ENCODE measurements at regions of chr5 and their contacts with region 1.

Region 1: DNA sequence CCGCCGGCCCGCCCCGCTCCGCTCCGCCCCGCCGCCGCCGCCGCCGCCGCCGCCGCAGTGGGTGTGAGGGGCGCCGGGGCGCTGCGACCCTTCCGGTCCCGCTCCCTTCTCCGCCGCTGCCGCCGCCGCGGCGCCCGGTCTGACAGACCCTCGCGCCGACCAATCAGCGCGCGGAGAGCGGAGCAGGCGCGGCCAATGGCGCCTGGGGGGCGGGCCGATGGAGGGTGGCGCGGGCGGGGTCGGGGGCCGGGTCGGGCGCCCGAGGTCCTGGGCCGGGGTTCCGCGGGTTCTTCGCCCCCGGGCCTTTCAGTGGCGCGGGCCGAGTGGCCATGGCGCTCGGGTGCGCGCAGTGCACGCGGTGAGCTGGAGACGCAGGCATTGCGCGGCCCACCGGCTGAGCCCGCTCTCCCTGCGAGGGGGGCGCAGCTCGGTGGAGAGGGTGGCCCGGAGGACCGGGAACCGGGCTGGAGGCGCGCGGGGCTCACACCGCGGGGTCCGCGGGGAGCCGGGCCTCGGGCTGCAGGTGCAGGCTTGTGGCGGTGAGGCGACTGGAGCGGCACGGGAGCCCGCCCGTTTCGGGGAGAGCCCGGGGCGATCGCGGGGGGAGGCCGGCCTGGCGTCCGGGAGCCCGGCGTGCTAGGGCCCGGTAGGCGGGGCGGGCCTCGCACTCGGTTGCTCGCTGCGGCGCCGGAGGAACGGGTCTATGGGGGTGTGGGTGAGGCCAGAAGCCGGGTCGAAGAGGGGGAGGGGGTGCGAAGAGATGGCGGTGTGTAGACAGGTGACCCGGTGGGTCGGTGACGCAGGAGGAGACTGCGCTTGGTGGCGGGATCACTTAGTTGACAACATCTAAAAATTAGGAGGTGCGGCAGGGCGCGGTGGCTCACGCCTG is at the start of gene MAPK9:
- DNase-seq: peak; percentile 69 to 93 (median 82)
- ATAC-seq: peak; percentile 68
- H3K4me3 ChIP-seq: peak within 1 kb of the TSS; percentile 67
- H3K4me3 Mint-ChIP-seq: peak within 1 kb of the TSS; percentile 97
- H3K27ac ChIP-seq: peak within 1 kb of the TSS; percentile 84 to 95
- H3K27ac Mint-ChIP-seq: peak within 1 kb of the TSS; percentile 99
- H3K4me1 ChIP-seq: peaks cover 46% of the 10 kb centered on the region
- H3K4me1 Mint-ChIP-seq: peaks cover 51% of the 10 kb centered on the region
- H3K27me3 ChIP-seq: no peaks in the 10 kb centered on the region
- H3K27me3 Mint-ChIP-seq: no peaks in the 10 kb centered on the region
- CTCF ChIP-seq: no peak
- total RNA-seq, gene MAPK9: 21.2 to 21.7 TPM

Region 2: DNA sequence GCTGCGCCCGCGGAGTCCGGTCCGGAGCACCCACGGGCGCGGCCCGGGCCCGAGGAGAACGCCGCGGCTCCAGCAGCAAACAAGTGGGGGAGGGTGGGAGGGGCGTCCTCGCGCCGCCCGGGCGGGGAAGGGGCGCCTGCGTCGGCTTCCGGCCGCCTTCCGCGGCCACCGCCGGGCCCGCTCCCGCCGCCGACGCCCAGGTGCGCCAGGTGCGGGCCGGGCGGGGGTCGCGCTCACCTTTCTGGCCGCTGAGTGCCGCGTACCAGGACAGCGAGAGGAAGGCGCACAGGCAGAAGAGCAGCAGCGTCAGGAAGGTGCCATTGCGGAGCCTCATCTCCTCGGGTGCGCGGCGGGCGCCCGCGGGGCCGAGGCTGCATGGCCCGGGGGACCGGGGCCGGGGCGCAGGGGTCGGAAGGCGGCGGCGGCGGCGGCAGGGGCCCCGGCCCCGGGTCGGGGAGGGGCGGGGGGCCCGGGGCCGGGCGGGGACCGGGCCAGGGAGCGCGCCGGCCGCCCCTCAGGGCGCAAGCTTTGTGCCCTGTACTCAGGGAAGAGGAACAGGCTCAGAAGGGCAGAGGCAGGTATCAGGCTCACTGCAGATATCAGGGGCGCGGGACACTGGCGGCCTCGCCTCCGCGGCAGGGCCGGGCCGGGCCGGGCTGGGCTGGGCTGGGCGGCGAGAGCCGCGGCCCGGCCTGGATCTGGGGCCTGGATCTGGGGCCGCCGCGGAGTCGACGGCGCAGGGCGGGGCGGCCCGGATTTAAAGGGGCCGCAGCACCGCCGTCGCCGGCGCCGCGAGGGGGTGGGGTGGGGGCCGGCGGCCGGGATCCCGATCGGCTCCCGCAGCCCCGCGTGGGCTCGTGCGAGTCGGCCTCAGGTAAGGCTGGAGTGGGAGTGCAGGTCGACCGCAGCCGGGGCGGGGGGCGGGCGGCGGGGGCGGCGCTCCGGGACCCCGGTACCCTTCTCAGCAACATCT is 485.7 kb before region 1 on chr5 and contains the start of gene MGAT4B:
- CTCF ChIA-PET with region 1: no interaction called
- POLR2A ChIA-PET with region 1: no interaction called
- intact Hi-C with region 1: loop called in 1 of 2 experiments (anchors 10 kb)
- DNase-seq: peak in 13 of 14 experiments; percentile 39 to 82 (median 62)
- ATAC-seq: peak; percentile 72
- H3K4me3 ChIP-seq: peak within 1 kb of the TSS; percentile 60
- H3K4me3 Mint-ChIP-seq: peak within 1 kb of the TSS; percentile 76
- H3K27ac ChIP-seq: peak within 1 kb of the TSS; percentile 48 to 67
- H3K27ac Mint-ChIP-seq: no peak within 1 kb of the TSS
- H3K4me1 ChIP-seq: peaks cover 54% of the 10 kb centered on the region
- H3K4me1 Mint-ChIP-seq: peaks cover 33% of the 10 kb centered on the region
- H3K27me3 ChIP-seq: no peaks in the 10 kb centered on the region
- H3K27me3 Mint-ChIP-seq: no peaks in the 10 kb centered on the region
- CTCF ChIP-seq: no peak
- total RNA-seq, gene MGAT4B: 141 to 145 TPM

Region 3: GRCh38 chr5:180315762-180316212 is 23.6 kb after region 1 on chr5:
- CTCF ChIA-PET with region 1: interaction called, 93 read pairs
- POLR2A ChIA-PET with region 1: interaction called, 29 read pairs
- intact Hi-C with region 1: loop called (anchors 1 kb)
- DNase-seq: peak; percentile 62 to 84 (median 72)
- ATAC-seq: peak; percentile 86
- H3K4me3 ChIP-seq: no peak overlapping the region
- H3K4me3 Mint-ChIP-seq: no peak overlapping the region
- H3K27ac ChIP-seq: no peak overlapping the region
- H3K27ac Mint-ChIP-seq: no peak overlapping the region
- H3K4me1 ChIP-seq: no peaks in the 10 kb centered on the region
- H3K4me1 Mint-ChIP-seq: peaks cover 6% of the 10 kb centered on the region
- H3K27me3 ChIP-seq: no peaks in the 10 kb centered on the region
- H3K27me3 Mint-ChIP-seq: peaks cover 4% of the 10 kb centered on the region
- CTCF ChIP-seq: peak; percentile 98

Region 4: DNA sequence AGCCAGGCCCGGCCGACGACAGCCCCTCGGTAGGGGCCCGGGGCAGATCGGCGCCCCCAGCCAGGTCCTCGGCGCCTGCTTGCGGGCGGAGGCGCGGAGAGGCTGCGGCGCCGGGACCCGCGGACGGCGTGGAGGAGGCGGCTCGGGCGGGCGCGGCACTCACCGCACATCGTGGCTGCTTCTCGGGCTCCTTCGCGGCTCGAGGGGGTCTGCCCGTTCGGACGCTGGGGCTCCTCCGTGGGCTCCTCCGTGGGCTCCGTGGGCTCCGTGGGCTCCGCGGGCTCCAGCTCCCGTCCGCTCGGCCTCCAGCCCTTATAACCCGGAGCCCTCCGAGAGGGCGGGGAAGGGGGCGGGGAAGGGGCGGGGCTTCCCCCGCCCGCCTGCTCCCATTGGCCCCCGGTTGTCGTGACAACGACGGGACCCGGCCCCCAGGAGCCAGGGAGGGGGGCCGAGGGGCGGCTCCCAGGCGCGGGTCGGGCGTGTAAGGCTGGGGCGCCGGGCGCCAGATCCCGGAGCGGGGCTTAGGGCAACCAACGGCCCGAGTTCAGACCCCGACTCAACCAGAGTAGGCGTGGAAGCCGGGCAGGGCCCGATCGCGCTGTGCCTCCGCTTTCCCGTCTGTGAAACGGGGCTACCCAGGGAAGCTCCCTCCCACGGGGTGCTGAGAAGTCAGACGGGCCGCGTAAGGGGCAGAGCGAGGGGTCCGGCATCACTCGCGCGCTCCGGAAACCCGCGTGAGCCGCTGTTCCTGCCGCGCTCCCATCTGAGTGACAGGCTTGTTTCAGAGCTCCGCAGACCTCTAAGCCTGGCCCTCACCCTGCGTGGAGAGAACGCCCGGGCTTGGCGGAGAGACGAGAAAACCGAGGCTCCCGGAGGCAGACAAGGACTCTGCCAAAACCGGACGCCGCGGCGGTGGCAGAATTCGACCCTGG is 61.1 kb after region 1 on chr5 and contains the start of gene GFPT2:
- CTCF ChIA-PET with region 1: no interaction called
- POLR2A ChIA-PET with region 1: interaction called, 3 read pairs
- intact Hi-C with region 1: loop called in 1 of 2 experiments (anchors 2 kb)
- DNase-seq: peak; percentile 48 to 87 (median 70)
- ATAC-seq: peak; percentile 82
- H3K4me3 ChIP-seq: peak within 1 kb of the TSS; percentile 79
- H3K4me3 Mint-ChIP-seq: peak within 1 kb of the TSS; percentile 87
- H3K27ac ChIP-seq: no peak within 1 kb of the TSS
- H3K27ac Mint-ChIP-seq: no peak within 1 kb of the TSS
- H3K4me1 ChIP-seq: peaks cover 24% of the 10 kb centered on the region
- H3K4me1 Mint-ChIP-seq: peaks cover 7% of the 10 kb centered on the region
- H3K27me3 ChIP-seq: peaks cover 45 to 46% of the 10 kb centered on the region in 2 experiments
- H3K27me3 Mint-ChIP-seq: peaks cover 63% of the 10 kb centered on the region
- CTCF ChIP-seq: no peak
- total RNA-seq, gene GFPT2: 1.1 to 1.5 TPM

Region 5: DNA sequence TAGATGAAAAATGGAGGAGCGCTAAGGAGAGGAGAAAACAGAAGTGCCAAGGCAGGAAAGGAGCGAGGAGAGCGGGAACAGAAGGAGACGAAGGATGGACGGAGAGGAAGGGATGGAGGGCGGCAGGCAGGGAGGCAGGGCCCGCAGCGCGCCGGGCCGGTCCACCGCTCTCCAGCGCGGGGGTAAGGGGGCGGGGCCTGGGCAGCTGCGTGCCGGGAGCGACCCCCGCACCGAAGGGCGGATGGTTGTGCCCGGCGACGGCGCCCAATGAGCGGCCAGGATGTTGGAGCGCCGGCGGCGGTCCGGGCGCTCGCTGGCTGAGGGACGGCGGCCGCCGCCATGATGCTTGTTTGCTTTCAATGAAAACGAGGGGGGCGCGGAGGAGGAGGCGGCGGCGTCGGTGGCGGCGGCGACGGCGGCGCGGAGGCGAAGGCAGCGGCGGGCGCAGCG is 201.9 kb after region 1 on chr5 and contains the start of gene CNOT6:
- CTCF ChIA-PET with region 1: no interaction called
- POLR2A ChIA-PET with region 1: interaction called, 3 read pairs
- intact Hi-C with region 1: loop called in 1 of 2 experiments (anchors 2 kb)
- DNase-seq: peak; percentile 89 to 99 (median 94)
- ATAC-seq: peak; percentile 88
- H3K4me3 ChIP-seq: peak within 1 kb of the TSS; percentile 73
- H3K4me3 Mint-ChIP-seq: peak within 1 kb of the TSS; percentile 100
- H3K27ac ChIP-seq: peak within 1 kb of the TSS; percentile 60 to 83
- H3K27ac Mint-ChIP-seq: peak within 1 kb of the TSS; percentile 98
- H3K4me1 ChIP-seq: peaks cover 34% of the 10 kb centered on the region
- H3K4me1 Mint-ChIP-seq: peaks cover 40% of the 10 kb centered on the region
- H3K27me3 ChIP-seq: no peaks in the 10 kb centered on the region
- H3K27me3 Mint-ChIP-seq: no peaks in the 10 kb centered on the region
- CTCF ChIP-seq: no peak
- total RNA-seq, gene CNOT6: 12.5 to 13.8 TPM

Region 6: GRCh38 chr5:180860887-180861822 is 569.0 kb after region 1 on chr5 and contains the start of gene ZFP62:
- CTCF ChIA-PET with region 1: no interaction called
- POLR2A ChIA-PET with region 1: no interaction called
- intact Hi-C with region 1: loop called in 1 of 2 experiments (anchors 10 kb)
- DNase-seq: peak; percentile 78 to 94 (median 85)
- ATAC-seq: peak; percentile 73
- H3K4me3 ChIP-seq: peak within 1 kb of the TSS; percentile 89
- H3K4me3 Mint-ChIP-seq: peak within 1 kb of the TSS; percentile 95
- H3K27ac ChIP-seq: peak within 1 kb of the TSS; percentile 85 to 88
- H3K27ac Mint-ChIP-seq: peak within 1 kb of the TSS; percentile 95
- H3K4me1 ChIP-seq: peaks cover 10% of the 10 kb centered on the region
- H3K4me1 Mint-ChIP-seq: peaks cover 27% of the 10 kb centered on the region
- H3K27me3 ChIP-seq: no peaks in the 10 kb centered on the region
- H3K27me3 Mint-ChIP-seq: peaks cover 5% of the 10 kb centered on the region
- CTCF ChIP-seq: peak; percentile 50
- total RNA-seq, gene ZFP62: 22.6 to 24.9 TPM